CD4-positive, alpha-beta memory T cell (primary cell): ENCODE measurements at regions of chr16 and their contacts with region 1.

Region 1: DNA sequence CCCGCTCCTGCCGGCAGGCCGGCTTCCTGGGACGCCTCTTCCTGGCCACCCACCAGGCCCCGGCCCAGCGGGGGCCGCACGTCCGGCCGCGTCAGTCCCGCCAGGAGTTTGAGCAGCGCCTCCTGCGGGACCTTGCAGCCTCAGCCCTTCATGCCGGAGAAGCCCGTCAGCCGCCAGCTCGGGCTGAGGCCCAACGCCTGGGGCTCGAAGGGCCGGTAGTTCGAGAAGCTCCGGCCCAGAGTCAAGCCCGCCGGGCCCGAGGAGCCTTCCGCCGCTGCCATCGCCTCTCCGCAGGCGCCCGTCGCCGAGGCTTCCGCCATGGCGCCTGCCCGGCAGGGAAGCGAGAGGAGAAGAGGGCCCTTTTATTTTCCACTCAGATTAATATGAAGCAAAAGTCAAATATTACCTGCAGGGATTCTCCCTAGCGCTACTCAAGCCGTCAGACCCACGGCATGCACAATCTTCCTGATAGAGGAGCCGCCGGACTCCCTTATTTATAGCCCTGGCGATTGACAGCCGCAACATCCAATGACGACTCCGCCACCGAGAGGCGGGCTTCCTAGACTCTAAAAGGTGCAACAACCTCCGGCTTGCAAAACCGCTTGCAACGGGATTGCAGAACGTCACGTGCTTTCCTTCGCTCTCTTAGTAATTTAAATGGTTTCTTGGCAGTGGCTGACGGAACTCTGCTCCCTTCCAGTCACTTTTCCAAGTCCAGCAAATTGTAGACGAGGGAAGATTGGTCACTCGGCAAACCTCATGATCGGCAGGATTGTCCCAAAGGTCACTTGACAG is at the start of gene SEPHS2:
- DNase-seq: peak; percentile 93 to 98 (median 94)
- H3K4me3 ChIP-seq: peak within 1 kb of the TSS; percentile 92 to 94
- H3K4me3 Mint-ChIP-seq: peak within 1 kb of the TSS; percentile 89 to 98 (median 96)
- H3K27ac ChIP-seq: peak within 1 kb of the TSS; percentile 96
- H3K27ac Mint-ChIP-seq: peak within 1 kb of the TSS; percentile 87 to 98 (median 96)
- H3K4me1 ChIP-seq: peaks cover 42% of the 10 kb centered on the region
- H3K4me1 Mint-ChIP-seq: peaks cover 24 to 44% (median 36%) of the 10 kb centered on the region in 4 donors
- H3K27me3 ChIP-seq: no peaks in the 10 kb centered on the region
- H3K27me3 Mint-ChIP-seq: no peaks in the 10 kb centered on the region
- total RNA-seq, gene SEPHS2: 42.0 to 44.4 TPM

Region 2: GRCh38 chr16:30458561-30459394 is 13.2 kb after region 1 on chr16:
- CTCF ChIA-PET with region 1: interaction called, 55 read pairs
- POLR2A ChIA-PET with region 1: interaction called, 31 read pairs
- intact Hi-C with region 1: no loop called
- DNase-seq: peak; percentile 72 to 85 (median 76)
- H3K4me3 ChIP-seq: peak overlapping the region in 1 of 2 donors; percentile 19
- H3K4me3 Mint-ChIP-seq: peak overlapping the region; percentile 64 to 81 (median 70)
- H3K27ac ChIP-seq: peak overlapping the region; percentile 48
- H3K27ac Mint-ChIP-seq: peak overlapping the region; percentile 87 to 95 (median 89)
- H3K4me1 ChIP-seq: peaks cover 35% of the 10 kb centered on the region
- H3K4me1 Mint-ChIP-seq: peaks cover 18 to 49% (median 31%) of the 10 kb centered on the region in 4 donors
- H3K27me3 ChIP-seq: no peaks in the 10 kb centered on the region
- H3K27me3 Mint-ChIP-seq: no peaks in the 10 kb centered on the region

Region 3: GRCh38 chr16:30482366-30482765 is 36.8 kb after region 1 on chr16:
- CTCF ChIA-PET with region 1: interaction called, 143 read pairs
- POLR2A ChIA-PET with region 1: interaction called, 1,162 read pairs
- intact Hi-C with region 1: no loop called
- DNase-seq: peak in 1 of 5 donors; percentile 15
- H3K4me3 ChIP-seq: no peak overlapping the region
- H3K4me3 Mint-ChIP-seq: peak overlapping the region in 6 of 8 donors; percentile 15 to 43 (median 26)
- H3K27ac ChIP-seq: no peak overlapping the region
- H3K27ac Mint-ChIP-seq: peak overlapping the region; percentile 35 to 93 (median 84)
- H3K4me1 ChIP-seq: peaks cover 56% of the 10 kb centered on the region
- H3K4me1 Mint-ChIP-seq: peaks cover 33 to 66% (median 38%) of the 10 kb centered on the region in 4 donors
- H3K27me3 ChIP-seq: no peaks in the 10 kb centered on the region
- H3K27me3 Mint-ChIP-seq: no peaks in the 10 kb centered on the region

Region 4: GRCh38 chr16:30491744-30492308 is 46.2 kb after region 1 on chr16:
- CTCF ChIA-PET with region 1: interaction called, 25 read pairs
- POLR2A ChIA-PET with region 1: interaction called, 1,162 read pairs
- intact Hi-C with region 1: loop called (anchors 1 kb)
- DNase-seq: peak in 1 of 5 donors; percentile 72
- H3K4me3 ChIP-seq: no peak overlapping the region
- H3K4me3 Mint-ChIP-seq: peak overlapping the region in 2 of 8 donors; percentile 21 to 39
- H3K27ac ChIP-seq: no peak overlapping the region
- H3K27ac Mint-ChIP-seq: peak overlapping the region; percentile 11 to 89 (median 74)
- H3K4me1 ChIP-seq: peaks cover 25% of the 10 kb centered on the region
- H3K4me1 Mint-ChIP-seq: peaks cover 13 to 37% (median 26%) of the 10 kb centered on the region in 4 donors
- H3K27me3 ChIP-seq: no peaks in the 10 kb centered on the region
- H3K27me3 Mint-ChIP-seq: no peaks in the 10 kb centered on the region

Region 5: DNA sequence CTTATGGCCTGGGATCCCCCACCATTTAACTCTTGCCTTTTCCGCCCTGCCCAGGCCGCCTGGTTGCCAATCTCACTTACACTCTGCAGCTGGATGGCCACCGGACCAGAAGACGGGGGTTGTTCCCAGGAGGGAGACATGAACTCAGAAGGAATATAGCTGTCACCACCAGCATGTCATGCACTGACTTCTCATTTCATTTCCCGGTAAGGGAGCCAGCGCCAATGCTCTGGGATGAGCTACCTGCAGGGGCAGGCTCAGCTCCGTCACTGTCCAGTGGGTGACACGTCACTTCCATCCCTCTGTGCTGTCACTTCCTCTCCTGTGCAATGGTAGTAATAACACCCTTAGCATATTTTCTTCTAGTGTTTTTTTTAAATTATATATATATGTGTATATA is 53.7 kb after region 1 on chr16:
- CTCF ChIA-PET with region 1: interaction called, 25 read pairs
- POLR2A ChIA-PET with region 1: interaction called, 1,162 read pairs
- intact Hi-C with region 1: no loop called
- DNase-seq: no peak
- H3K4me3 ChIP-seq: no peak overlapping the region
- H3K4me3 Mint-ChIP-seq: peak overlapping the region in 1 of 8 donors; percentile 28
- H3K27ac ChIP-seq: no peak overlapping the region
- H3K27ac Mint-ChIP-seq: peak overlapping the region in 3 of 7 donors; percentile 6 to 64 (median 42)
- H3K4me1 ChIP-seq: no peaks in the 10 kb centered on the region
- H3K4me1 Mint-ChIP-seq: peaks cover under 1 to 4% (median 4%) of the 10 kb centered on the region in 4 donors
- H3K27me3 ChIP-seq: no peaks in the 10 kb centered on the region
- H3K27me3 Mint-ChIP-seq: no peaks in the 10 kb centered on the region

Region 6: DNA sequence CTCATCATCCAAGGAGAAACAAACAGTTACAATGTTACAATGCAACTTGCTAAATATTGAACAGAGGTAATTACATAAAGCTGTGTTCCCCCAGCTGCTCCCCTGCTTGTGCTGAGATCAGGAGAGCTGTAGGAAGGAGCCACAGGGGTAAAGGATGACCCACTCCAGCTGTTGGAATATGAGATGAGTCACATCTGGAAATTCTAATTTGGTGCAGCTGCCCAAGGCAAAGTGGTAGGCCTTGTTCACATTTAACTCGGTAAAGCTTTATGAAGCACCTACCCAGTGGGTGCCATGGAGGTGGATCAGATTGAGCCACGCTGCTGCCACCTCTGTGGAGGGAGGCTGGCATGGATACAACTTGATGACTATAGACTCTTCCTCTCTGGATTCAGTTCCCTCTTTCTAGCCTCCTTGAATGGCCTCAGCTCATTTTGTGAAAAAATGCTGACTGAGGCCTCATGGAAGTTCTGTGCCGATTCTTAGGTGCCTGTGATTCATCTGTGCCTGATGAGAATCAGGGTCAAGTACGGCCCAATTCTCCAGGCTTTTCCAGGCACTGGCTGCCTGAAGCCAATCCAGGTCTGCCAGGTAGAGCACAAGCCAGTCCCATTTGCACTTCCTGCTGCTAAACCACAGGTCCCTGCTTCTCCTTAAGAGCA is 157.1 kb after region 1 on chr16:
- CTCF ChIA-PET with region 1: interaction called, 11 read pairs
- POLR2A ChIA-PET with region 1: interaction called, 5 read pairs
- intact Hi-C with region 1: loop called (anchors 1 kb)
- DNase-seq: no peak
- H3K4me3 ChIP-seq: no peak overlapping the region
- H3K4me3 Mint-ChIP-seq: no peak overlapping the region
- H3K27ac ChIP-seq: no peak overlapping the region
- H3K27ac Mint-ChIP-seq: peak overlapping the region in 3 of 7 donors; percentile 23 to 52 (median 42)
- H3K4me1 ChIP-seq: peaks cover 3% of the 10 kb centered on the region
- H3K4me1 Mint-ChIP-seq: peaks cover 2 to 9% (median 5%) of the 10 kb centered on the region in 4 donors
- H3K27me3 ChIP-seq: no peaks in the 10 kb centered on the region
- H3K27me3 Mint-ChIP-seq: no peaks in the 10 kb centered on the region